Activated naive CD4-positive, alpha-beta T cell treated with anti-CD3 and anti-CD28 coated beads for 36 hours (primary cell): ENCODE measurements at regions of chr3 and their contacts with region 1.

Region 1: DNA sequence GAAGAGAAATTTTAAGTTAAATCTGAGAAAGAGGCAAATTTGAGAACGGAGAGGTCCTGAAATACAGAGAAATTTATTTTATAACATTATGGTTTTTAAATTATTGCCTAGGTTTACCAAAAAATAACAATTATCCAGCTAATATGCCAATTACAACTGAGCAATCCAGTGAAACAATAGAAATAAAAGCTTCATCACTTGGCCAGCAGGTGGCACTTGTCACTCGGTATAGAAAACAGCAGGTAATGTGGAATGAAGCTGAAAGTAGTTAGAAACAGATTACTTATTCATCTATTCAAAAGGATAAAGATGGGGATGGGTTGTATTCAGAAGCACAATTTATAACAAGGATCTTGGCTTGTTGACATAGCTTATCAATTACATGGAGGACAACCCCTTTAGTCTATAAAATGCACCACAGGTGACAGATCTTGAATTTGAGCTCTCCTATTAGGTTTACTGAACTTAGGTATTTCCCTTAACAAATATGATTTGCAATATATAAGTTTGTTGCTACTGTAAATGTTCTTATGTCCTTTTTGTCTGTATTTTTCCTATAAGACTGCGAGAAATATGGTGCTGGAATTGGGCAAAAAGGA is 70.1 kb upstream of the GUCA1C start:
- DNase-seq: peak; percentile 62
- H3K4me3 Mint-ChIP-seq: no peak overlapping the region
- H3K27ac Mint-ChIP-seq: no peak overlapping the region
- H3K4me1 Mint-ChIP-seq: no peaks in the 10 kb centered on the region
- H3K27me3 Mint-ChIP-seq: peaks cover 2% of the 10 kb centered on the region

Region 2: GRCh38 chr3:108489771-108490170 is 534.0 kb before region 1 on chr3:
- CTCF ChIA-PET with region 1: interaction called, 3 read pairs
- intact Hi-C with region 1: loop called (anchors 5 kb)
- DNase-seq: peak; percentile 53
- H3K4me3 Mint-ChIP-seq: no peak overlapping the region
- H3K27ac Mint-ChIP-seq: no peak overlapping the region
- H3K4me1 Mint-ChIP-seq: peaks cover 2% of the 10 kb centered on the region
- H3K27me3 Mint-ChIP-seq: no peaks in the 10 kb centered on the region

Region 3: GRCh38 chr3:108662130-108662738 is 361.5 kb before region 1 on chr3:
- CTCF ChIA-PET with region 1: interaction called, 3 read pairs
- intact Hi-C with region 1: loop called (anchors 5 kb)
- DNase-seq: peak; percentile 63
- H3K4me3 Mint-ChIP-seq: no peak overlapping the region
- H3K27ac Mint-ChIP-seq: no peak overlapping the region
- H3K4me1 Mint-ChIP-seq: peaks cover 12% of the 10 kb centered on the region
- H3K27me3 Mint-ChIP-seq: no peaks in the 10 kb centered on the region

Region 4: DNA sequence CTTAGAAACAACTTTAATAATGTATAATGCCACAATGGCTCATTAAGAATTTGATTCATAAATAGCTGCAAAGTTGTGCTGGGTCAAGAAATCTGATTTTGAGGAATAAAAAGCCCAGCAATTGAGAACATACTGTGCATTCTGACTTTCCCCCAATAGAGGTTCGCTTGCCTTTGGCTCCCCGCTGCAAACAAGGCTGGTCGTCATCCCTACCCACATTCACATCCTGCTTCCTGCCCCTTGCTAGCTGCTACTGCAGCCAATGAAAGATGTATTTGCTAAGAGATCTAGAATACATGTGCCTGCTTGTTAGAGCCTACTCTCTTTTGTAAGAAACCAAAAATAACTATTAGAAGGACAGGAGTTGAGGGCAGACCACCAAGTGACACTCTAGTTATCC is 18.3 kb before region 1 on chr3:
- CTCF ChIA-PET with region 1: interaction called, 10 read pairs
- intact Hi-C with region 1: no loop called
- DNase-seq: no peak
- H3K4me3 Mint-ChIP-seq: no peak overlapping the region
- H3K27ac Mint-ChIP-seq: no peak overlapping the region
- H3K4me1 Mint-ChIP-seq: no peaks in the 10 kb centered on the region
- H3K27me3 Mint-ChIP-seq: no peaks in the 10 kb centered on the region

Region 5: DNA sequence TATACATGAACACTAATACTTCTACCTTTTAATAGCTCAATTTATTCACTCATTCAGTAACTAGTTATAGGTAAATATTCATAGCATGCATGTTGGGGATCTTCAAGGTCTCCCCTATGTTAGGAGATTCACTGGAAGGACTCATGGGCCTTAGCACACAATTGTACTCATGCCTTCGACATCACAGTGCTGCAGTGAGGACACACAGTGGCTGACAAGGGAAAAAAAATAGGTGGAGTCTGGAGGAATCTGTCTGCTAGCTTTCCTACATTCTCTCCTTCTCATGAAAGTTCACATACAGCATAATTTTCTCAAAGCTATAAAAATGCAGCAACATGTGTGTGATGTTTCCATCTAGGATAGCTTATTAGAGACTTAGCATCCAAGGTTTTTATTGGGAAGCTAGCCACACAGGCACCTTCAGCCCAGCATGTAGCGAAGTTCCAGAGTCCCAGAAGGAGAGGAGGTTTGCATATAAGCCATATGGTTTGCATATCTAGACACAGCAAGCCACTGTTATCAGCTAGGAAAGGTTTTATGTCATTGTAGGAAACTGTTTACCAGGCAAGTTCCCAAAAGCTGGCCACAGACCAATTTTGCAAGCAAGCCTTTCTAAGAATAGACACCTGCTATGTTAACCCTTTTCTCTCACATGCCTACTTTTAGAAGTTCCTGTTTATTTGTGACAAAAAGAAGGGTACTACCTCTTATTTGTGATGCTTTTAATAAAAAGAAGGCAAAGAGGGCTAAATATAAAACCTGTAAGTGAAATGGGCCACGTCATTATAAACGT is 47.8 kb after region 1 on chr3:
- CTCF ChIA-PET with region 1: interaction called, 13 read pairs
- intact Hi-C with region 1: no loop called
- DNase-seq: no peak
- H3K4me3 Mint-ChIP-seq: no peak overlapping the region
- H3K27ac Mint-ChIP-seq: no peak overlapping the region
- H3K4me1 Mint-ChIP-seq: peaks cover 5% of the 10 kb centered on the region
- H3K27me3 Mint-ChIP-seq: peaks cover 20% of the 10 kb centered on the region

Region 6: GRCh38 chr3:109081746-109082510 is 58.2 kb after region 1 on chr3:
- CTCF ChIA-PET with region 1: interaction called, 30 read pairs
- intact Hi-C with region 1: loop called (anchors 1 kb)
- DNase-seq: peak; percentile 38
- H3K4me3 Mint-ChIP-seq: no peak overlapping the region
- H3K27ac Mint-ChIP-seq: no peak overlapping the region
- H3K4me1 Mint-ChIP-seq: no peaks in the 10 kb centered on the region
- H3K27me3 Mint-ChIP-seq: peaks cover 6% of the 10 kb centered on the region

Region 7: GRCh38 chr3:109098079-109098644 is 74.4 kb after region 1 on chr3:
- CTCF ChIA-PET with region 1: interaction called, 6 read pairs
- intact Hi-C with region 1: loop called (anchors 1 kb)
- DNase-seq: peak; percentile 19
- H3K4me3 Mint-ChIP-seq: no peak overlapping the region
- H3K27ac Mint-ChIP-seq: no peak overlapping the region
- H3K4me1 Mint-ChIP-seq: no peaks in the 10 kb centered on the region
- H3K27me3 Mint-ChIP-seq: peaks cover 2% of the 10 kb centered on the region